PC-9 (cell line): ENCODE measurements at regions of chr3 and their contacts with region 1.

Region 1: DNA sequence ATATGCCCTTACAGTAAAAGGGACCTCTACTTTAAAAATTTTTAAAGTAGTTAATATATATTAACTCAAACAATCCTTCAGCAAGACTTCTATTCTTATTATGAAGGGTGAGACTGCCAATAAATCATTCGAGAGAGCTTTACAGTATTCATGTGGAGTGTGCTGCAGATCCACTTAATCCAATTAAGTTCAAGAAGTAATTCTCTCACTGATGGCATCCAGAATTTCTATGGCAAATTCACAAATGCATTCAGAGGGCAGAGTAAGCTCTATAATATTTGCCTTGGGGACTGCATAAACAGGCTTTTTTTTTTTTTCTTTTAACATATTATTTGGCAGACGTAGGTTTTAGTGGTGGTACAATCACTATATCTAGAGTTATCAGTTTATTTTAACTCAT is 692.0 kb downstream of the NLGN1 start:
- DNase-seq: no peak
- H3K4me3 ChIP-seq: no peak overlapping the region
- H3K27ac ChIP-seq: no peak overlapping the region
- H3K4me1 ChIP-seq: no peaks in the 10 kb centered on the region
- H3K27me3 ChIP-seq: no peaks in the 10 kb centered on the region
- CTCF ChIP-seq: no peak

Region 2: GRCh38 chr3:173977747-173978146 is 111.8 kb before region 1 on chr3:
- CTCF ChIA-PET with region 1: no interaction called
- POLR2A ChIA-PET with region 1: no interaction called
- intact Hi-C with region 1: no loop called
- DNase-seq: no peak
- H3K4me3 ChIP-seq: no peak overlapping the region
- H3K27ac ChIP-seq: no peak overlapping the region
- H3K4me1 ChIP-seq: no peaks in the 10 kb centered on the region
- H3K27me3 ChIP-seq: no peaks in the 10 kb centered on the region
- CTCF ChIP-seq: no peak

Region 3: DNA sequence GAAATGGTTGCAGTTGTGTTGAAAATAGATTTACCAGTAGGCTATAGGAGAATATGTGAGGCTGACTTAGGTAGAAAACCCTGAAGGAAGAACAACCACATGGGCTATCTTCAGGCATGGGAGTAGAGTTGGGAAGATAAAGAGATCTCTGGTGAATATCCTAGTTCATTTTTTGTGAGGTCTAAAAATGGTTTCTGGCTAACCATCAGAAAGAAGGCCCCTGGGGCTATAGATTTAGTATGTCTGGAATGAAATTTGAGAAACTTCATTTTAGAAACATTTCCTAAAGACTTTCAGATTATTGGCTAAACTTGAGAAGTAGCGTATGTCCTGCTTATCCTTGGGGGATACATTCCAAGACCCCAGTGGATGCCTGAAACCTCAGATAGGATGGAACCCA is 917.7 kb after region 1 on chr3:
- CTCF ChIA-PET with region 1: no interaction called
- POLR2A ChIA-PET with region 1: interaction called, 13 read pairs
- intact Hi-C with region 1: no loop called
- DNase-seq: no peak
- H3K4me3 ChIP-seq: no peak overlapping the region
- H3K27ac ChIP-seq: no peak overlapping the region
- H3K4me1 ChIP-seq: no peaks in the 10 kb centered on the region
- H3K27me3 ChIP-seq: no peaks in the 10 kb centered on the region
- CTCF ChIP-seq: no peak